ENCODE measurements at regions of chr1 and their contacts with region 1.

Region 1: GRCh38 chr1:109151164-109151990 is 37.5 kb downstream of the ELAPOR1 start:
- DNase-seq: peak; percentile 49
- ATAC-seq: peak; percentile 80
- H3K4me3 ChIP-seq: peak overlapping the region in 2 of 3 experiments; percentile 35 to 65; a peak in 3 of 6 replicates
- H3K27ac ChIP-seq: peak overlapping the region; percentile 3
- H3K4me1 ChIP-seq: peaks cover 67% of the 10 kb centered on the region
- H3K27me3 ChIP-seq: no peaks in the 10 kb centered on the region
- CTCF ChIP-seq: 0 out of 2 replicates have a peak, but pooled peaks have one; percentile 3
- EP300 ChIP-seq: no peak
- POLR2A ChIP-seq: no peak
- RAD21 ChIP-seq: no peak

Region 2: GRCh38 chr1:109067883-109068282 is 83.5 kb before region 1 on chr1:
- CTCF ChIA-PET with region 1: no interaction called
- POLR2A ChIA-PET with region 1: no interaction called
- in situ Hi-C with region 1: no loop called
- intact Hi-C with region 1: no loop called
- DNase-seq: no peak
- ATAC-seq: no peak
- H3K4me3 ChIP-seq: no peak overlapping the region
- H3K27ac ChIP-seq: no peak overlapping the region
- H3K4me1 ChIP-seq: no peaks in the 10 kb centered on the region
- H3K27me3 ChIP-seq: no peaks in the 10 kb centered on the region
- CTCF ChIP-seq: no peak
- EP300 ChIP-seq: no peak
- POLR2A ChIP-seq: no peak
- RAD21 ChIP-seq: no peak

Region 3: DNA sequence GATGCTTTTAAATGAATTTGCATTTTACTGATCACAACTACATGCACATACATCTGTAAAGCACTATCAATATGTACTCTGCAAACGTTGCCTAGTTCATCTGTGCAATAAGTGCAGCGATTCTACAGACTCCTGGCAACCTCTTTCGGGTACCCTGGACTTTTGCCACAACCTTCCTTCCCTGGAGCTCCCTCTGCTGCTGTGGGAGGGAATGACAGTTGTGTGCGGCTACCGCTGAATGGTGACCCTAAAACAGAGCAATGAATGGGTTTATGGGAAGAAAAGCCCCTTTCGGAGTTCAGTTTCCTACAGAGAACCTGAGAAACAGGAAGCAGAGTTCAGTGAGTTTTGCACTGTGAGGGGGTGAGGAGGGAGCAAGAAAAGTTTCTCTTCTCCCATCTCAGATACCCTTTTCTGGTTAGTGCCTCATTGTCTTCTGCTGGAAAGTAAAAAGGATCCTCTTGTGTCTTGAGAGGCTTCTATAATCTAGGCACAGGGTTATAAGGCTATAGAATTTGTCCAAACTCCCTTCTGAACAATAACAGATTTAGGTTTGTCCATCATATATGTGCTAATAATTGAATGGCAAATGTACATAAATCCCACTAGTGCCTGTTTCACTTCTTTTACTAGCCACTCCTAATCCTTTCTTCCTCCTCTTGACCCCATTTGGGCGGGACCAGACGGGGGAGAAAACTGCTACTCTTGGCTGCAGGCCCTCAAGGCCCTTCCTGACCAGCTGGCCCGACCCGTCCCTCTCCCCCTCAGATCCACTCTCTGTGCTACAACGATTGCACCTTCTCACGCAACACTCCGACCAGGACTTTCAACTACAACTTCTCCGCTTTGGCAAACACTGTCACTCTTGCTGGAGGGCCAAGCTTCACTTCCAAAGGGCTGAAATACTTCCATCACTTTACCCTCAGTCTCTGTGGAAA is 42.5 kb after region 1 on chr1:
- CTCF ChIA-PET with region 1: no interaction called
- POLR2A ChIA-PET with region 1: interaction called, 3 read pairs
- in situ Hi-C with region 1: no loop called
- intact Hi-C with region 1: loop called (anchors 2 kb)
- DNase-seq: no peak
- ATAC-seq: peak; percentile 58
- H3K4me3 ChIP-seq: peak overlapping the region in 1 of 3 experiments; percentile 52; a peak in 1 of 6 replicates
- H3K27ac ChIP-seq: no peak overlapping the region
- H3K4me1 ChIP-seq: peaks cover 55% of the 10 kb centered on the region
- H3K27me3 ChIP-seq: no peaks in the 10 kb centered on the region; a peak in 2 of 5 replicates
- CTCF ChIP-seq: peak; percentile 84
- EP300 ChIP-seq: no peak
- POLR2A ChIP-seq: no peak
- RAD21 ChIP-seq: peak; percentile 63; the same call in 1 of the 2 replicates

Region 4: GRCh38 chr1:109298666-109299557 is 147.5 kb after region 1 on chr1:
- CTCF ChIA-PET with region 1: no interaction called
- POLR2A ChIA-PET with region 1: no interaction called
- in situ Hi-C with region 1: no loop called
- intact Hi-C with region 1: no loop called
- DNase-seq: peak; percentile 98
- ATAC-seq: peak; percentile 85
- H3K4me3 ChIP-seq: peak overlapping the region in 2 of 3 experiments; percentile 6 to 65; a peak in 1 of 6 replicates
- H3K27ac ChIP-seq: peak overlapping the region; percentile 96
- H3K4me1 ChIP-seq: peaks cover 51% of the 10 kb centered on the region
- H3K27me3 ChIP-seq: no peaks in the 10 kb centered on the region
- CTCF ChIP-seq: no peak
- EP300 ChIP-seq: peak; percentile 90 to 94
- POLR2A ChIP-seq: peak in 1 of 2 experiments; percentile 48; a peak in 1 of 4 replicates
- RAD21 ChIP-seq: no peak; the same call in 1 of the 2 replicates

Region 5: GRCh38 chr1:109308986-109309746 is 157.8 kb after region 1 on chr1:
- CTCF ChIA-PET with region 1: no interaction called
- POLR2A ChIA-PET with region 1: no interaction called
- in situ Hi-C with region 1: no loop called
- intact Hi-C with region 1: no loop called
- DNase-seq: peak; percentile 27
- ATAC-seq: no peak
- H3K4me3 ChIP-seq: no peak overlapping the region
- H3K27ac ChIP-seq: peak overlapping the region; percentile 38
- H3K4me1 ChIP-seq: peaks cover 77% of the 10 kb centered on the region
- H3K27me3 ChIP-seq: no peaks in the 10 kb centered on the region
- CTCF ChIP-seq: no peak
- EP300 ChIP-seq: no peak
- POLR2A ChIP-seq: no peak
- RAD21 ChIP-seq: no peak

Region 6: GRCh38 chr1:110218739-110219138 is 1067.4 kb after region 1 on chr1:
- CTCF ChIA-PET with region 1: no interaction called
- POLR2A ChIA-PET with region 1: no interaction called
- in situ Hi-C with region 1: no loop called
- intact Hi-C with region 1: no loop called
- DNase-seq: no peak
- ATAC-seq: peak; percentile 64
- H3K4me3 ChIP-seq: no peak overlapping the region
- H3K27ac ChIP-seq: no peak overlapping the region
- H3K4me1 ChIP-seq: no peaks in the 10 kb centered on the region
- H3K27me3 ChIP-seq: peaks cover 0 to 6% of the 10 kb centered on the region in 2 experiments; a peak in 1 of 5 replicates
- CTCF ChIP-seq: no peak
- EP300 ChIP-seq: no peak
- POLR2A ChIP-seq: no peak
- RAD21 ChIP-seq: no peak

Measured in HepG2 (cell line).